ENCODE measurements at regions of chr2 and their contacts with region 1.

Region 1: DNA sequence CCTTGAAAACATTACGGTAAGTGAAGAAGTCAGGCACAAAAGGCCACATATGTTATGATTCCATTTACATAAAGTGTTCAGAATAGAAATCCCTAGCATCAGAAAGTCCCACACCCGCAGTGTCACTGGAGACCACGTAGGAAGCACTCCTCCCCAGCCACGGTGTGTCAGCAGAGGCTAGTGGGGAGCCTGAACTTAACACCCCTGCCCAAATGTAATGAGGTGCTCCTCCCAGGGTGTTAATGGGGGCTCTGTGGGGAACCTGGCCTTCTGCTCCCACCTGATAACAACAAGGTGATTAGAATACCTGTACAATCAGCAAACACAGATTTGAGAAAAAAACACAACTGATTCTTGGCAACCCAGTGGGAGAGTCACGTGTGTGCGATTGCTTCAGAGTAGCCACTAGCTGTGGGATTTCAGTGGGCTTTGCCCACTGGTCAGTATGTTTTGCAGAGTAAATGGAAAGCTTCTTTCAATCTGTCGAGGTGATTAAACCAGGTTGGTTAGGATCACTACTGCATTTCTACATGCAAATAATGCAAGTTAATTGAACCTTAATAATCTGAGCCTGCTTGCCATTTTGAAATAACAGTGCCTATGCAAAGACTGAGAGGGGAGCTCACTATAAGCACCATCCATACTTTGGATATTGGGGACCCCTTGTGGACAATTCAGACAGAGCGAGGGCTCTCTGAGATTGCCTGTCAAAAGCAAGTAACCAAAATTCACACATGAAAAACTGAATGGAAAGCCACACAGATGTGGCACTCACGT is 20.6 kb upstream of the ATRAID start:
- DNase-seq: no peak
- H3K4me3 ChIP-seq: no peak overlapping the region
- H3K27ac ChIP-seq: no peak overlapping the region
- H3K4me1 ChIP-seq: no peaks in the 10 kb centered on the region
- H3K27me3 ChIP-seq: no peaks in the 10 kb centered on the region
- CTCF ChIP-seq: peak in 2 of 3 experiments; percentile 75 to 81; a peak in 3 of 4 replicates
- EP300 ChIP-seq: no peak
- POLR2A ChIP-seq: no peak
- RAD21 ChIP-seq: peak; percentile 82 to 87

Region 2: DNA sequence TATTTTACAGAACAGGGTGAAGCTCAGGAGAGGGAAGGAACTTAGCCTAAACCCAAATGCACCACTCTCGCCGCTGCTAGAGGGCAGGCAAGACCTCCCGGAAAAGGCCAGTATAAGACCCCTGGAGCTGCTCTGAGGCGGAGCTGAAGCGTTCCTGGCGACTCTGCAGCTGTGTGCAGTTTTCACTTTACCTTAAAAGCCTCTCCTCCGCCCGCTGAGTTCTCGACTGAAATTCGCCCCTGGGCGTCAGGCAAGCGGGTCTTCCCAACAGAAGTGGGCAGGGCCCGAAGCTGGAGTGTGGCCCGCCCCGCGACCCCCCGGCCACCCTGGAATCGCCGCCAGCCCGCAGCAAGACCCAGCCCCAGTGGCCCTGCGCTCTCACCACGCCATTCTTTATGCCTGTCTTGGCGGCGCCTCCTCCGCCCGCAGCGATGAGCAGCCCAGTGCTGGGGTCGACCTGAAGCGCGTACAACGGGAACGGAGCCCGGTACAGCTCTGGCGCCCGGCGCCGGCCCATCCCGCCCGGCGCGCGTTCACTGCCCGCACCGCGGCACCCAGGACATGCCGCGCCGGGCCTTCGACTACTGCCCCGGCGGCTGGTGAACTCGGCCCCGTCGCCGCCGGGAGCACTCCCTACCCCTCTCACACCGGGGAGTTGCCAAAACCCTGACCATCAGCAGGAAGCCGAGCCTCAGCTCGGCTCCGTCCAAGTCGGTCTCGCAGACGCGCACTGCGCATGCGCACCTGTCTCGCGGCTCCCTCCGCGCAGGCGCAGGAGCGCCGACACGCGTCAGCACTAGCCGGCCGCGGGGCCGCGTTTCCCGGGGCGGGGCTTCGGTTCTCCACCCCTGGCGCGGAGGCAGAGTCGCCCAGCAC is 57.1 kb before region 1 on chr2 and contains the start of gene PREB:
- CTCF ChIA-PET with region 1: interaction called, 26 read pairs
- POLR2A ChIA-PET with region 1: no interaction called
- DNase-seq: peak; percentile 92 to 100
- H3K4me3 ChIP-seq: peak within 1 kb of the TSS; percentile 68 to 91 (median 88)
- H3K27ac ChIP-seq: peak within 1 kb of the TSS; percentile 25; the same call in 1 of the 2 replicates
- H3K4me1 ChIP-seq: peaks cover 0 to 4% (median 3%) of the 10 kb centered on the region in 4 experiments; a peak in 5 of 7 replicates
- H3K27me3 ChIP-seq: no peaks in the 10 kb centered on the region
- CTCF ChIP-seq: peak in 2 of 3 experiments; percentile 46 to 60; a peak in 2 of 4 replicates
- EP300 ChIP-seq: no peak
- POLR2A ChIP-seq: no peak
- RAD21 ChIP-seq: peak; percentile 56 to 67
- total RNA-seq, gene PREB: 51.2 and 54.1 TPM in 2 replicates

Region 3: GRCh38 chr2:27152786-27153510 is 38.3 kb before region 1 on chr2:
- CTCF ChIA-PET with region 1: interaction called, 15 read pairs
- POLR2A ChIA-PET with region 1: interaction called, 3 read pairs
- DNase-seq: no peak
- H3K4me3 ChIP-seq: no peak overlapping the region
- H3K27ac ChIP-seq: no peak overlapping the region
- H3K4me1 ChIP-seq: no peaks in the 10 kb centered on the region; a peak in 1 of 7 replicates
- H3K27me3 ChIP-seq: no peaks in the 10 kb centered on the region
- CTCF ChIP-seq: no peak
- EP300 ChIP-seq: no peak
- POLR2A ChIP-seq: no peak
- RAD21 ChIP-seq: no peak

Region 4: GRCh38 chr2:27159271-27159670 is 32.0 kb before region 1 on chr2:
- CTCF ChIA-PET with region 1: interaction called, 15 read pairs
- POLR2A ChIA-PET with region 1: interaction called, 3 read pairs
- DNase-seq: no peak
- H3K4me3 ChIP-seq: no peak overlapping the region
- H3K27ac ChIP-seq: no peak overlapping the region
- H3K4me1 ChIP-seq: no peaks in the 10 kb centered on the region; a peak in 1 of 7 replicates
- H3K27me3 ChIP-seq: no peaks in the 10 kb centered on the region
- CTCF ChIP-seq: no peak
- EP300 ChIP-seq: no peak
- POLR2A ChIP-seq: no peak
- RAD21 ChIP-seq: no peak

Region 5: GRCh38 chr2:27174316-27175040 is 16.8 kb before region 1 on chr2:
- CTCF ChIA-PET with region 1: interaction called, 26 read pairs
- POLR2A ChIA-PET with region 1: no interaction called
- DNase-seq: no peak
- H3K4me3 ChIP-seq: no peak overlapping the region
- H3K27ac ChIP-seq: no peak overlapping the region
- H3K4me1 ChIP-seq: no peaks in the 10 kb centered on the region
- H3K27me3 ChIP-seq: no peaks in the 10 kb centered on the region; a peak in 4 of 7 replicates
- CTCF ChIP-seq: no peak
- EP300 ChIP-seq: no peak
- POLR2A ChIP-seq: no peak
- RAD21 ChIP-seq: no peak

Region 6: GRCh38 chr2:27316655-27317411 is 125.6 kb after region 1 on chr2:
- CTCF ChIA-PET with region 1: no interaction called
- POLR2A ChIA-PET with region 1: no interaction called
- DNase-seq: no peak
- H3K4me3 ChIP-seq: no peak overlapping the region
- H3K27ac ChIP-seq: no peak overlapping the region
- H3K4me1 ChIP-seq: peaks cover 0 to 5% (median 0%) of the 10 kb centered on the region in 4 experiments; a peak in 3 of 7 replicates
- H3K27me3 ChIP-seq: no peaks in the 10 kb centered on the region
- CTCF ChIP-seq: no peak
- EP300 ChIP-seq: no peak
- POLR2A ChIP-seq: no peak
- RAD21 ChIP-seq: no peak